CD4-positive, alpha-beta memory T cell (primary cell): ENCODE measurements at regions of chr13 and their contacts with region 1.

Region 1: DNA sequence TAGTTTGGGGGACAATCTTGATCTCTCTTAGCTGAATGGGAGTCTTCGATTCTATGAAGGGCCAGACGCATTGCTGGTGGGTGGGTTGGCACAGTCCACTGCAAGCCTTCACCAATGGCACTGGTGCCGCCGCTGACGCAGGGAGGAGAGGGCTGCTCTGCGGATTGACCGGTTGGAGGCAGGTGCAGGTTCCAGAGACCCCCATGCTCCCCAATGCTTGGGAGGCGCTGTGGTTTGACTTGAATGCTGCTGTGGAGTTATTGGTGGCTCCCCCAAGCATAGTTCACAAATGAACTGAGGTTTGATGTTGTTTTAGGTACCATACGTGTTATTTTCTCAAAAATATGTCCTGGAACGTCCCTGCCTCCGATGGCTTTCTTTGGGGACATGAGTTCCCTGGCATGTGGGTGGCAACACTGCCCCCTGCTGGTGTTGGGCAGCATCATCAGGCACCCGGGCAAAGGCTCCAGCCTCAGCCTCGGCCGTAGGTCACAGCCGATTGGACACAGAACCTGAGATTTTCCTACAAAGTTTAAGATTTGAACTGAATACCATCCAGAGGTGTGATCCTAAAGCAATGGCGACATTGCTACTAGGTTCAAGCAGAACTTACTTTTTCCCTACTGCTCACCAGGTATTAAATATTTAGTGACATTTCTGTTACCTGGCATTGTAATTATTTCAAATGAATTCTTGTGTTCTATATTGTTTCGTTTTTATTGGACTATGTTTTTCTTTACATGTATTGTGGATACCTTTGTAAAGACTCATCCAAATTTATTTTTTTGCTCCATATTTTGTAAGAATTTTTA is 95.5 kb downstream of the ANKRD10 start:
- DNase-seq: peak; percentile 63 to 71 (median 67)
- H3K4me3 ChIP-seq: no peak overlapping the region
- H3K4me3 Mint-ChIP-seq: peak overlapping the region in 2 of 8 donors; percentile 24 to 42
- H3K27ac ChIP-seq: no peak overlapping the region
- H3K27ac Mint-ChIP-seq: peak overlapping the region in 1 of 7 donors; percentile 47
- H3K4me1 ChIP-seq: peaks cover 7% of the 10 kb centered on the region
- H3K4me1 Mint-ChIP-seq: peaks cover 4 to 13% (median 6%) of the 10 kb centered on the region in 4 donors
- H3K27me3 ChIP-seq: no peaks in the 10 kb centered on the region
- H3K27me3 Mint-ChIP-seq: peaks cover 2 to 6% of the 10 kb centered on the region in 2 donors

Region 2: DNA sequence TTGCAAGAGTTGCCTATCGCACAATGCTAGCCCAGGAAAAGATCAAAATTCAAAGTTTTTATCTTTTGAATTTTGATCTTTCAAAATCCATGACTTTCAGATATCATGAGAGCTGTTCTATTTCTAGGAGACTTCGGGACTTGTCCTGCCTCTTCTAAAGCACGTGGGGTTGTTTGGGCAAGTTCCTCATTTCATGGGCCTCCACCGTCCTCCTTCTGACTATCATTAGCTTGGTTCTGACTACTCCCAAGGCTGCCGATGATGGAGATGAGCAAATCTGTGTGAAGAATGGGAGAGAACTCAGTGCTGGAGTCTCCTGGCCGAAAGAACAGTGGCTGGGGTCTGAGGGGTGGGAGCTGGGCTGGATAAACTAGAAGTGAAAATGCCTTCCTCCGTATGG is 598.9 kb before region 1 on chr13:
- CTCF ChIA-PET with region 1: interaction called, 4 read pairs
- POLR2A ChIA-PET with region 1: no interaction called
- intact Hi-C with region 1: loop called (anchors 5 kb)
- DNase-seq: no peak
- H3K4me3 ChIP-seq: no peak overlapping the region
- H3K4me3 Mint-ChIP-seq: no peak overlapping the region
- H3K27ac ChIP-seq: no peak overlapping the region
- H3K27ac Mint-ChIP-seq: no peak overlapping the region
- H3K4me1 ChIP-seq: no peaks in the 10 kb centered on the region
- H3K4me1 Mint-ChIP-seq: no peaks in the 10 kb centered on the region
- H3K27me3 ChIP-seq: no peaks in the 10 kb centered on the region
- H3K27me3 Mint-ChIP-seq: peaks cover 5 to 9% of the 10 kb centered on the region in 2 donors

Region 3: DNA sequence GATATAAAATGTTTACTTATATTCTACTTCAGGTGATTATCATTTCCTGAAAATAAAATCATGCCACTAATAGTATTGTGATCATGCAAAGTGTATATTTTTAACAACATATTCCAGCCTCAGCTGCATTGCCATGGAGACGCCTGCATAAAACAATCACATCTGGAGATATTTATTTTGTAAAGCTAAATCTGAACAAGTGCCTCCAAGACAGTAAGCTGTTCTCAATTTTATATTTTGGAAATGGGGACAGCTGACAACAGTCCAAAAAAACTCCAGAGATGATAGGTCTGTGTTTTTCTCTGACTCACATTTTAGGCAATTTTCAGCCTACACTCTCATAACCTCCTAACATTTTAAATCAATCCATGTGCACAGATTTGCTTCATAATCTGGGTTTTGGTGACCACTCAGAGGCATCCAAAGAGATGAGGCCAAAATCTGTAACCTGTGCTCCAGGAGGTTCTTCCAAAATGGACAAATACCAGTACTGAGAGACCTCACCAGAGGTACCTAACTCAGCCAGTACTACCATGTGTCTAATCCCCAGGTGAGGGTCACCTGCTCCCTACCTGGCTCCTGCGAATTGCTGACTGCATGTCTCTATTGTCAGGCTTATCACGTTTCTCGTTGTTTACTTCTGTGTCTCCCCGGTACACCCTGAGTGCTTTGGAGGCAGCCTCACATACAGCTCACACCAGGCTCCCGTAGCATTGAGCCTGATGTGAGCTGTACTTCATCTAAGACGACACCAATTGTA is 575.2 kb before region 1 on chr13:
- CTCF ChIA-PET with region 1: no interaction called
- POLR2A ChIA-PET with region 1: no interaction called
- intact Hi-C with region 1: no loop called
- DNase-seq: no peak
- H3K4me3 ChIP-seq: no peak overlapping the region
- H3K4me3 Mint-ChIP-seq: no peak overlapping the region
- H3K27ac ChIP-seq: no peak overlapping the region
- H3K27ac Mint-ChIP-seq: no peak overlapping the region
- H3K4me1 ChIP-seq: no peaks in the 10 kb centered on the region
- H3K4me1 Mint-ChIP-seq: no peaks in the 10 kb centered on the region
- H3K27me3 ChIP-seq: no peaks in the 10 kb centered on the region
- H3K27me3 Mint-ChIP-seq: peaks cover 5 to 6% of the 10 kb centered on the region in 2 donors

Region 4: GRCh38 chr13:110387391-110388107 is 431.9 kb before region 1 on chr13:
- CTCF ChIA-PET with region 1: no interaction called
- POLR2A ChIA-PET with region 1: no interaction called
- intact Hi-C with region 1: no loop called
- DNase-seq: no peak
- H3K4me3 ChIP-seq: no peak overlapping the region
- H3K4me3 Mint-ChIP-seq: peak overlapping the region in 4 of 8 donors; percentile 20 to 35 (median 24)
- H3K27ac ChIP-seq: no peak overlapping the region
- H3K27ac Mint-ChIP-seq: no peak overlapping the region
- H3K4me1 ChIP-seq: no peaks in the 10 kb centered on the region
- H3K4me1 Mint-ChIP-seq: peaks cover 0 to 13% (median 5%) of the 10 kb centered on the region in 4 donors
- H3K27me3 ChIP-seq: no peaks in the 10 kb centered on the region
- H3K27me3 Mint-ChIP-seq: peaks cover 19 to 22% of the 10 kb centered on the region in 2 donors

Region 5: DNA sequence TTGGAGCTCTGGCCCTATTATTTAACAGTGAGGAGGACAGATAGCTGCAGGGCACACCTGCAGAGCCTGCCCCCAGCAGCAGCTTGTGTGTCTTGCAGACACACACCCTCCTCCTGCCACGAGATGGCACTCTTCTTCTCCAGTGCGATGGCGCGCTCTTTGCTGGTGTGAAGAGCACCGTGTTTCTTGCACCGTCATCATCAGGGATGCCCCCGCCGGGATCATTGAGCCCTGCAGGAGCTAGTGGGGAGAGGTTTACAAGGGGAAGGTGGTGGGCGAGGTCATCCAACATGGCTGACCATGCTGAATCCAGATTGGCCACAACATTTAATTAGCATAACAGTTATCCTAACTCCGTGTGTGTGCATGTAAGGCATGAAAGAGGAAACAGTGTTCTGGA is 363.5 kb before region 1 on chr13:
- CTCF ChIA-PET with region 1: interaction called, 10 read pairs
- POLR2A ChIA-PET with region 1: no interaction called
- intact Hi-C with region 1: no loop called
- DNase-seq: peak in 4 of 5 donors; percentile 31 to 48 (median 44)
- H3K4me3 ChIP-seq: no peak overlapping the region
- H3K4me3 Mint-ChIP-seq: peak overlapping the region in 6 of 8 donors; percentile 22 to 78 (median 66)
- H3K27ac ChIP-seq: no peak overlapping the region
- H3K27ac Mint-ChIP-seq: no peak overlapping the region
- H3K4me1 ChIP-seq: peaks cover 5% of the 10 kb centered on the region
- H3K4me1 Mint-ChIP-seq: peaks cover 4 to 5% (median 5%) of the 10 kb centered on the region in 4 donors
- H3K27me3 ChIP-seq: no peaks in the 10 kb centered on the region
- H3K27me3 Mint-ChIP-seq: peaks cover 15 to 17% of the 10 kb centered on the region in 2 donors

Region 6: DNA sequence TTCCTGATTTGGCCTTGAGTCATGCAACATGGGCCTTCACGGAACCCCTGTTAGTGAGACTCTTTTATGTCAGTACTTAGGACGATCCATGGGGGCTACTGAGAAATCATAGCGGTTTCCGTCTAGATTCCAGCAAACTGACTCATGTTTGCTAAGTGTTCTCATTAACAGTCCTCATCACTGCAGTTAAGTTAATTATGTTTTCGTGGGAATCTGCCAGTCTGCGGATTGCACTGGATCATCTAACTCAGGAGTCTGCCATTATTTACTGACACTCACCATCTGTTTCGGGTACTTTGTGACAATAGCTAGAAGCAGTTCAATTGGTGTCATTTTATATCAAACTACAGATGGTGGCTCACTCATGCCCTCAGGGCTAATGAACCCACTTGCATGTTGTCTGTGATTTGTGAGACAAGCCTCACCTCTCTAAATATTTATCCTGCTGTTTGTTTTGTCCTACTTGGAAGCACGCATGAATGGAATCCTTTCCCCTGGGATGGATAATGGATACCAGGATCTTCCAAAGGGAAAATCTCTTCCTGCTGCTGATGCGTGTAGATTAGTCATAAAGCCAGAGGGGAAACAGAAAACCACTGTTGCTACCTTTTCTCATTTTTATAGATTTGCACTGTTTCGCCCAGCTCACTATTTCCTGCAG is 319.7 kb before region 1 on chr13:
- CTCF ChIA-PET with region 1: no interaction called
- POLR2A ChIA-PET with region 1: no interaction called
- intact Hi-C with region 1: no loop called
- DNase-seq: no peak
- H3K4me3 ChIP-seq: no peak overlapping the region
- H3K4me3 Mint-ChIP-seq: no peak overlapping the region
- H3K27ac ChIP-seq: no peak overlapping the region
- H3K27ac Mint-ChIP-seq: no peak overlapping the region
- H3K4me1 ChIP-seq: no peaks in the 10 kb centered on the region
- H3K4me1 Mint-ChIP-seq: no peaks in the 10 kb centered on the region
- H3K27me3 ChIP-seq: no peaks in the 10 kb centered on the region
- H3K27me3 Mint-ChIP-seq: peaks cover 6 to 12% of the 10 kb centered on the region in 2 donors

Region 7: GRCh38 chr13:110538632-110539031 is 280.8 kb before region 1 on chr13:
- CTCF ChIA-PET with region 1: no interaction called
- POLR2A ChIA-PET with region 1: no interaction called
- intact Hi-C with region 1: no loop called
- DNase-seq: no peak
- H3K4me3 ChIP-seq: no peak overlapping the region
- H3K4me3 Mint-ChIP-seq: no peak overlapping the region
- H3K27ac ChIP-seq: no peak overlapping the region
- H3K27ac Mint-ChIP-seq: peak overlapping the region in 1 of 7 donors; percentile 1
- H3K4me1 ChIP-seq: no peaks in the 10 kb centered on the region
- H3K4me1 Mint-ChIP-seq: peaks cover 0 to 7% (median 6%) of the 10 kb centered on the region in 4 donors
- H3K27me3 ChIP-seq: no peaks in the 10 kb centered on the region
- H3K27me3 Mint-ChIP-seq: no peaks in the 10 kb centered on the region

Region 8: DNA sequence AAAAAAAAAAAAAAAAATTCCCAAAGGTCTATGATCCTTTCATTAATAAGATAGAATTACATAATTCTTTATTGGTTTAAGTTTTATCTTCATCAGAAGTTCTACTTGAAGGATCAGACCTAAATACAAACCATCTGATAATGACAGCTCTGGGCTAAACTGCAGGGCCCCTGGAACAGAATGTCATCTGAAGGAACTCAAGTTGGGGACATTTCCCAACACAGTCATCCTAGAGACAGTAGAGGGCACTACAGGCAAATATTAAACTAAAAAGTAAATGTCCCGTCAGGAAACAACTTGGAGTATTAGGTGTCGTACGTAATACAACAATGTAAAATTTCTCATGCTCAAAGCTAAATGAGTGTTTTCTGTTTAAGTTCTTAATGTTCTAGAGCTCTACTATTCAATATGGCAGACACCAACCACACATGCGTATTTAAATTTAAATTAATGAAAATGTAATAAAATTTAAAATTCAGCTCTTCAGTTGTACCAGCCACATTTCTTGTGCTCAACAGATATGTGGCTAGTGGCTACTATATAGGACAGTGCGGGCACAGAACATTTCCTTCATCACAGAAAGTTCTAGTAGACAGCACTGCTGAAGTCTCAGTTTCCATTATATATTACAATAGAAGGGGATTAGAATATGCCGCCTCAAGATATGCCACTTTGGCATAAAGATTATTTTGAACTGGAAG is 225.8 kb before region 1 on chr13:
- CTCF ChIA-PET with region 1: interaction called, 12 read pairs
- POLR2A ChIA-PET with region 1: no interaction called
- intact Hi-C with region 1: no loop called
- DNase-seq: peak in 4 of 5 donors; percentile 26 to 36 (median 30)
- H3K4me3 ChIP-seq: no peak overlapping the region
- H3K4me3 Mint-ChIP-seq: no peak overlapping the region
- H3K27ac ChIP-seq: no peak overlapping the region
- H3K27ac Mint-ChIP-seq: no peak overlapping the region
- H3K4me1 ChIP-seq: no peaks in the 10 kb centered on the region
- H3K4me1 Mint-ChIP-seq: peaks cover 0 to 2% (median 1%) of the 10 kb centered on the region in 4 donors
- H3K27me3 ChIP-seq: no peaks in the 10 kb centered on the region
- H3K27me3 Mint-ChIP-seq: peaks cover 0 to 2% of the 10 kb centered on the region in 2 donors

Region 9: GRCh38 chr13:110644892-110645521 is 174.4 kb before region 1 on chr13:
- CTCF ChIA-PET with region 1: interaction called, 8 read pairs
- POLR2A ChIA-PET with region 1: no interaction called
- intact Hi-C with region 1: loop called (anchors 1 kb)
- DNase-seq: peak; percentile 38 to 60 (median 56)
- H3K4me3 ChIP-seq: no peak overlapping the region
- H3K4me3 Mint-ChIP-seq: peak overlapping the region in 1 of 8 donors; percentile 31
- H3K27ac ChIP-seq: no peak overlapping the region
- H3K27ac Mint-ChIP-seq: peak overlapping the region in 3 of 7 donors; percentile 25 to 55 (median 40)
- H3K4me1 ChIP-seq: no peaks in the 10 kb centered on the region
- H3K4me1 Mint-ChIP-seq: peaks cover 0 to 14% (median 0%) of the 10 kb centered on the region in 4 donors
- H3K27me3 ChIP-seq: no peaks in the 10 kb centered on the region
- H3K27me3 Mint-ChIP-seq: no peaks in the 10 kb centered on the region

Region 10: GRCh38 chr13:110680851-110681250 is 138.6 kb before region 1 on chr13:
- CTCF ChIA-PET with region 1: interaction called, 80 read pairs
- POLR2A ChIA-PET with region 1: no interaction called
- intact Hi-C with region 1: loop called (anchors 1 kb)
- DNase-seq: peak in 4 of 5 donors; percentile 12 to 22 (median 20)
- H3K4me3 ChIP-seq: no peak overlapping the region
- H3K4me3 Mint-ChIP-seq: no peak overlapping the region
- H3K27ac ChIP-seq: no peak overlapping the region
- H3K27ac Mint-ChIP-seq: no peak overlapping the region
- H3K4me1 ChIP-seq: no peaks in the 10 kb centered on the region
- H3K4me1 Mint-ChIP-seq: peaks cover 6 to 21% (median 11%) of the 10 kb centered on the region in 4 donors
- H3K27me3 ChIP-seq: no peaks in the 10 kb centered on the region
- H3K27me3 Mint-ChIP-seq: no peaks in the 10 kb centered on the region

Region 11: DNA sequence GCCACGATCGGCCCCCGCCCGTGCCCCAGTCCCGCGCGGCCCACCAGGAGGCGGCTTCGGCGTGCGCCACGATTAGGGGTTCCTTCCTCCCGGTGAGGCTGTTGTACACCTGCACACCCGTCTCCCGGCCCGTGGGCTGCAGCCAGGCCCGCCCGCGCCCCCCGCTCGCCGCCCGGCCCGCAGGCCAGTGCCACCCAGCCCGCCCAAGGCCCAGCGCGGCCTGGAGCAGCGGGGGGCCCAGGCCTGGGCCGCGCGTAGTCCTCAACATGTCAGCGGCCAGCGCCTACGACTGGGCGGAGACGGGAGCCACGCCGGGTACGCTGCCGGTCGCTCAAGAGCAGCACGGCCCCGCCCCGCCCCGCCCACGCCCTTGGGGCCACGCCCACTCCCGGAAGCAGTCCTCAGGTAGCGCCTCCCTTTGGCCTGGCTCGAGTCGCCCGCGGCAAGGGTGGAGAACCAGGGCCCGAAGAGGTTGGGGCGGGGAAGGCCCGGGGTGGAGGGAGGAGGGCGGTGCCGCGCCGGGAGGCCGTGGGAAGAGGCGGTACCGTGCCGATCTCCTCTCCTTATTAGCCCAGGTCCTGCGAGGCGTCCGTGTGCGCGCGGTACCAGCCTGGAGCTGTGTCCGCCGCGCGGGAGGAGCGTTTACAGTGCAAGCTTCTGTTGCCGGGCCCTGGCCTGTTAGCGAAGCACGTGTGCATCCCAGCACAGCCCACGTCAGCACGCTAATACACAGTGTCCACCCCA is 113.4 kb before region 1 on chr13 and contains the start of gene CARS2:
- CTCF ChIA-PET with region 1: interaction called, 7 read pairs
- POLR2A ChIA-PET with region 1: interaction called, 3 read pairs
- intact Hi-C with region 1: loop called (anchors 1 kb)
- DNase-seq: peak; percentile 85 to 93 (median 86)
- H3K4me3 ChIP-seq: peak within 1 kb of the TSS; percentile 49 to 64
- H3K4me3 Mint-ChIP-seq: peak within 1 kb of the TSS; percentile 91 to 96 (median 94)
- H3K27ac ChIP-seq: peak within 1 kb of the TSS; percentile 74
- H3K27ac Mint-ChIP-seq: peak within 1 kb of the TSS; percentile 83 to 96 (median 93)
- H3K4me1 ChIP-seq: peaks cover 41% of the 10 kb centered on the region
- H3K4me1 Mint-ChIP-seq: peaks cover 27 to 49% (median 40%) of the 10 kb centered on the region in 4 donors
- H3K27me3 ChIP-seq: no peaks in the 10 kb centered on the region
- H3K27me3 Mint-ChIP-seq: no peaks in the 10 kb centered on the region
- total RNA-seq, gene CARS2: 99.9 to 102 TPM